ENCODE measurements at regions of chr10 and their contacts with region 1.

Region 1: DNA sequence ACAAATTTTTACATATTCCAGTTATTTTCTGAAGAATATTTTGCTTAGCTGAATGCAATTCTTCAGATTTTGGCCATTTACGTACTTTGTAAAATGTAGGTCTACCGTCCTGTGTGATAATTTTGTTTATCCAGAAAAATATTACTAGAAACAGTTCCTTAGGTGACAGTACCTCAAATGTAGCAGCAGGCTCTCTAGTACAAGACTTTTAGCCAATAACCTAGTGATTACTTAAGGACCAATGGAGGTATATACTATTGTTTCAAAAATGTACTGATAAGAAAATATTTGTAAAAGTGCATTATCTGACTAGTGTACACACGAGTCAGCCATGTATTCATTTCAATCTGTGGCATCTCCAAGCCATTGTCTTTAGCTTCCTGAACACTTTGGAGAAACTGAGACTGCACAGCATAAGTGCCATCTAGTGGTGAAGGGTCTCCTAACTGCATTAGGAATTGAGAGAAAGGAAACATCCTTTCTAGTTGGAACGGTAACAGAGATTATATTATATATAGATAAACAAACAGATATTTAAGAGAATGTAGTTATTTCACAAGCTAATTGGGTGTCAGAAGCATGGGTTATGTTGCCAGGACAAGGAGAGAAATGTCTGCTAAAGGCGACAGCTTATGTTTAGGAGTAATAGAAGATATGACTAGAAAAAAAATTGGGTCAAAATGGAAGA is 23.7 kb downstream of the RTKN2 start:
- H3K4me3 ChIP-seq: no peak overlapping the region
- H3K27ac ChIP-seq: no peak overlapping the region
- H3K4me1 ChIP-seq: no peaks in the 10 kb centered on the region; the same call in 1 of the 2 replicates
- CTCF ChIP-seq: peak; percentile 44; the same call in 1 of the 2 replicates

Region 2: DNA sequence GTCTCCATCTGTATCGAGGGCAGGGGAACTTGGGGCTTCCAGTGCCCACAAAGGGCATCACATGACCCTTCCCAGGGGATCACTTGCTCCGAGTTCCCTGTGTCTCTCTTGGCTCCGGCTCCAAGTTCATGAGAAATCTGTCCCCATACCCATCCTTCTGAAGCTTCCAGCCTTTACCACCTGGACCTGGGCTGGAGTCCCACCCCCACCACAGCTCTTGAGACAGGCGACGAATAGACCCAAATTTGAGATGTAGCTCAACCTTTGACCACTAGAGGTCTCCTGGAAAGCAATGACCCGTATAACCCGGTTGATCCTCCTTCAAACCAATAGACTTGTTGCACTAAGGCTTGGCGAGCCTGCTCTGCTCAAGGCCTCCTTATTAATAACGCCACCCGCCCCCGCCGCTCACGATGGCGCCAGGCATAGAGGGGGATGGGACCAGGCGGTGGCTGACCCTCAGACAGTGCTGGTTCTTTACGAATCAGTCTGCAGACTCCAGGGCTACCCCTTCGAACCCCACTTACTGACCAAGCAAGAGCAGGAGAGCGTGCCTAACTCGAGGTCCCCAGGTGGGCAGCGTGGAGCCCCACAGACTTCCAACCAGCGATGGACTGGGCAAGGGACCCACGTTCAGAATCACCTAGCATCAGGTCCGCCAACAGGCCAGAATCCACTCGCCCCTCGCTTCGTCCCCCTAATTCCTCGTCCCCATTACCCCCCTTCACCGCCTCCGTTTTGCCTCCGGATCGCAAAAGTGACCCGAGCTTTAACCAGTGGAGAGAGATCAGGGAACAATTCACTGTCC is 347.9 kb before region 1 on chr10:
- CTCF ChIA-PET with region 1: interaction called, 12 read pairs
- POLR2A ChIA-PET with region 1: interaction called, 3 read pairs
- H3K4me3 ChIP-seq: no peak overlapping the region
- H3K27ac ChIP-seq: peak overlapping the region; percentile 100
- H3K4me1 ChIP-seq: peaks cover 13% of the 10 kb centered on the region
- CTCF ChIP-seq: peak; percentile 69; the same call in 1 of the 2 replicates

Region 3: GRCh38 chr10:62038609-62039190 is 206.2 kb before region 1 on chr10:
- CTCF ChIA-PET with region 1: interaction called, 91 read pairs
- POLR2A ChIA-PET with region 1: interaction called, 3 read pairs
- H3K4me3 ChIP-seq: no peak overlapping the region
- H3K27ac ChIP-seq: no peak overlapping the region; the same call in 1 of the 2 replicates
- H3K4me1 ChIP-seq: peaks cover 19% of the 10 kb centered on the region
- CTCF ChIP-seq: peak; percentile 56; the same call in 1 of the 2 replicates

Region 4: GRCh38 chr10:62050893-62051433 is 194.0 kb before region 1 on chr10:
- CTCF ChIA-PET with region 1: interaction called, 12 read pairs
- POLR2A ChIA-PET with region 1: no interaction called
- H3K4me3 ChIP-seq: peak overlapping the region; percentile 16
- H3K27ac ChIP-seq: no peak overlapping the region
- H3K4me1 ChIP-seq: peaks cover 38% of the 10 kb centered on the region
- CTCF ChIP-seq: no peak

Region 5: GRCh38 chr10:62071846-62072281 is 173.1 kb before region 1 on chr10:
- CTCF ChIA-PET with region 1: interaction called, 11 read pairs
- POLR2A ChIA-PET with region 1: interaction called, 7 read pairs
- H3K4me3 ChIP-seq: no peak overlapping the region
- H3K27ac ChIP-seq: no peak overlapping the region
- H3K4me1 ChIP-seq: peaks cover 3% of the 10 kb centered on the region
- CTCF ChIP-seq: no peak

Region 6: DNA sequence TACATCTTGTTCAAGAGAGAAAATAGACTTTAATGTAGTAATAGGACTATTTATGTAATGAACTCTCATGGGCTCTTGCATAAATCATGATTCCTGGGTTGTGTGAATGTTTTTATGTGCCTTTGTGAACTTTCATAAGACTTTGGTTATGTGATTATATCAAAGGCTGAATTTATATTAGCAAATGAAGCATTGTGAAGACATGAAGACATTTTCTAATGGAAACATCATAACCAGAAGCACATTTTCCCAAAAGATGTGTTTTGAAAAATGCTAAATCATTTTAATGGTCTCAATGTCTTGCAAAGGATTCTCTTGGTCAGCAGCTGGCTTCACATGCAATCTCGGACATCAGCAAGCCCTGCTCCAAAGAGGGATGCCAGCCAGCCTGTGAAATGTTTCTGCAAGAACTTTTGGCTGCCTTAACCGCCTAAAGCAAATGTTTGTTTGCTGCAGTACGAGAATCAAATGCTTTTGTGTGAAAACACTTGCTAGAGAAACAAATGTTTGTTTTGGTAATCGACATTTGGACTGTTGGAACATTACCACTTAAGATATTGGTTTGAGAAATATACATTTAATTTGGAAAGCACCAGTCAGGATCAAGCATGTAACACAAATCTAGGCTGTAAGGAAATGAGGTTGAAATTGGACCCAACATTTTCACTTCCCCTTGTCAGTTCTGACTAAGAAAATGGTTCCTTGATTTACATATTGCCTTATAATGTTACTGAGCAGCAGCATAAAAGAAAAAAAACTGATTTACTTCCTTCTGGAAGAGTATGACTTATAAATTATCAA is 78.4 kb before region 1 on chr10:
- CTCF ChIA-PET with region 1: no interaction called
- POLR2A ChIA-PET with region 1: no interaction called
- H3K4me3 ChIP-seq: no peak overlapping the region
- H3K27ac ChIP-seq: no peak overlapping the region
- H3K4me1 ChIP-seq: no peaks in the 10 kb centered on the region
- CTCF ChIP-seq: no peak

Region 7: GRCh38 chr10:62231371-62231770 is 13.6 kb before region 1 on chr10:
- CTCF ChIA-PET with region 1: interaction called, 12 read pairs
- POLR2A ChIA-PET with region 1: no interaction called
- H3K4me3 ChIP-seq: no peak overlapping the region
- H3K27ac ChIP-seq: no peak overlapping the region
- H3K4me1 ChIP-seq: no peaks in the 10 kb centered on the region
- CTCF ChIP-seq: no peak

Region 8: DNA sequence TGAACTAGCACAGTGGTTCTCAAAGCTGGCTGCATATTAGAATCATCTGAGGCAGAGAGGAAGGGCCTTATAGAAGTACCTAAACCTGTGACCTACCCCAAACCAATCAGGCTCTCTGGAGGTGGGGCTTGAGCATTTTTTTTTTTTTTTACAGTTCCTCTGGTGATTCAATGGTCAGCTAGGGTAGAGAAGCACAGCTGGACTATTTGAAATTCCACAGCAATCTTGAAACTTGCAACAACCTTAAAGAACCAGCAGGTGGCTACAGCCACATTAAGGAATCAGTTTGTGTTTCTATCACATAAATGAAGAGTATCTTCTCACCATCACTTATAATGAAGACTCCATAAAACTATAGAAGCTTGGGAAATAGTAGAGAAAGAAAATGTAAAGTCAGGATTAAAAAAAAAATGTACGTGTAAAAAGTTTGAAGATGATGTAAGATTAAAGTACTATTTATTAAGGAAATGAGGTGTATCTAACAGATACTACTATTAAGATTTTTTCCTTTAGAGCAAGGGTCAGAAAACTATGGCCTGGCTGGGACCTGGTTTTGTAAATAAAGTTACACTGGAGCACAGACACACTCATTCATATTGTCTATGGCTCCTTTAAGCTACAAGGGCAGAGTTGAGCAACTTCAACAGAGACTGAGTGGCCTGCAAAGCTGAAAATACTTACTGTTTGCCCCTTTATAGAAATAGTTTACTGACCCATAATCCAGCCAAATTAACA is 19.9 kb after region 1 on chr10:
- CTCF ChIA-PET with region 1: interaction called, 14 read pairs
- POLR2A ChIA-PET with region 1: no interaction called
- H3K4me3 ChIP-seq: no peak overlapping the region
- H3K27ac ChIP-seq: no peak overlapping the region
- H3K4me1 ChIP-seq: peaks cover 9% of the 10 kb centered on the region
- CTCF ChIP-seq: 0 out of 2 replicates have a peak, but pooled peaks have one; percentile 27

Region 9: DNA sequence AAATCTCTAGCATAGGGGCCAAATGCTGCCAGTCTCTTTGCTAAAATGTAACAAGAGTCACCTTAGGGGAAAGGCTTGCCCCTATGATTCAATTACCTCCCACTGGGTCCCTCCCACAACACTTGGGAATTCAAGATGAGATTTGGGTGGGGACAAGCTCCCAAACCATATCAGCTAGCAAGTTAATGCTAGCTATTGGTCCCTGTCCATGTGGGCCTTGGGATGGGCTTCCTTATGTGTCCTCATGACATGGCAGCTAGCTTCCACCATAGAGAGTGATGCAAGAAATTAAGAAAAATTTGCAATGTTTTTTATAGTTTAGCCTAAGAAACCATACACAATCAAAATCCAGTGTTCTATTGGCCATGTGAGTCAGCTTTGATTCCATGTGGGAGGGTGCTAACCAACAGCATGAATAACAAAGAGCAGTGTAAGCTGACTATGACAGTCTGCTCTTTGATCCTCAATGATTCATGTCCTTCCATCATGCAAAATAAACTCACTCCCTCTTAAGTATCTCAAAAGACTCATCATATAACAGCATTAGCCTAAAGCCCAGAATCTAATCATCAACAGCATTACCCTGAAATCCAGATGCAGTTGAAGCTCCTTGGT is 107.5 kb after region 1 on chr10:
- CTCF ChIA-PET with region 1: no interaction called
- POLR2A ChIA-PET with region 1: no interaction called
- H3K4me3 ChIP-seq: no peak overlapping the region
- H3K27ac ChIP-seq: no peak overlapping the region
- H3K4me1 ChIP-seq: no peaks in the 10 kb centered on the region
- CTCF ChIP-seq: no peak